ENCODE measurements at regions of chr9 and their contacts with region 1.

Region 1: DNA sequence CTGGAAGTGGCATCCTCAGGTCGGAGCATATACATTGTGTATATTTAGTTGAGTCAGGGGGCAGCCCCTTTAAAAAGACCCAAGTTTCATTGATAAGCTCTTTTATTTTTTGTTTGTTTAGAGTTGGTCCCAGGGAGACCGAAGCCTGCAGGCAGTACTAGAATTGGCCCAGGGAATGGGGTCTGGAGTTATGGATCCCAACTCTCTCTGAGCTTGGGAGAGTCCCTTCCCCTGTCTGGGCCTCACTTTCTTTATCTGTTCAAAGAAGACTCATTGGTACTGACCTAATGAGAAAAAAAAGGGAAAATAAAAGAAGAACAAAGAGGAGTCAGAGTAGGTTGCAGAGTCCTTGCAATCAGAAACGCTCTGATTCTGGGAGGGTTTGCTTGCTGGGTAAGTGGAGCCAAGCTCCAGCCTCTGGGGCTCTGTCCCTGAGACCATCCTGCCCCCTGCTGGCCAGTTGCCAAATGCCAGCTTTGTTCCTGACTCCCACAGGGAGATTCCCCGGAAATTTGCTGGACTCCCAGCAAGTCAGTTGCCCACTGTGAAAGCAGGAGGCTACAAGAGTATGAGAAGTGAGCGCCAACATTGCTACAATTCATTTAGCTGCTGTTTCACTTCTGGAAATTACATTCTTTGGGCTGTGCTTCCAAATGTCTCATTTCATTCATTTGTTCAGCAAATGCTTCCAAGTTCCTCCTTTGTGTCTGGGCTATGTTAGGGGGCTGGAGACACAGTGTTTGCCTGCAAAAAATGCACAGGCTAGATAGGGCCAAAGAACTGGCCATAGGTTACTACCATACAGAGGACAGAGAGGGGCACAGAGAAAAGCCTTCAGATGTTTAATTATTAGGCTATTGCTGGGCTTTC is 156.2 kb downstream of the MELK start:
- DNase-seq: peak; percentile 78 to 88
- H3K4me3 ChIP-seq: no peak overlapping the region
- H3K4me3 Mint-ChIP-seq: no peak overlapping the region
- H3K27ac Mint-ChIP-seq: no peak overlapping the region
- H3K4me1 ChIP-seq: no peaks in the 10 kb centered on the region
- H3K4me1 Mint-ChIP-seq: no peaks in the 10 kb centered on the region
- H3K27me3 ChIP-seq: no peaks in the 10 kb centered on the region
- H3K27me3 Mint-ChIP-seq: no peaks in the 10 kb centered on the region
- CTCF ChIP-seq: peak; percentile 91 to 92

Region 2: GRCh38 chr9:36632892-36633291 is 96.0 kb before region 1 on chr9:
- CTCF ChIA-PET with region 1: interaction called, 33 read pairs
- POLR2A ChIA-PET with region 1: no interaction called
- intact Hi-C with region 1: loop called (anchors 1 kb)
- DNase-seq: peak in 1 of 2 experiments; percentile 3
- H3K4me3 ChIP-seq: no peak overlapping the region
- H3K4me3 Mint-ChIP-seq: no peak overlapping the region
- H3K27ac Mint-ChIP-seq: no peak overlapping the region
- H3K4me1 ChIP-seq: no peaks in the 10 kb centered on the region
- H3K4me1 Mint-ChIP-seq: no peaks in the 10 kb centered on the region
- H3K27me3 ChIP-seq: no peaks in the 10 kb centered on the region
- H3K27me3 Mint-ChIP-seq: no peaks in the 10 kb centered on the region
- CTCF ChIP-seq: peak; percentile 38 to 41

Region 3: GRCh38 chr9:36873247-36873875 is 144.5 kb after region 1 on chr9:
- CTCF ChIA-PET with region 1: no interaction called
- POLR2A ChIA-PET with region 1: no interaction called
- intact Hi-C with region 1: no loop called
- DNase-seq: peak; percentile 71 to 74
- H3K4me3 ChIP-seq: no peak overlapping the region
- H3K4me3 Mint-ChIP-seq: no peak overlapping the region
- H3K27ac Mint-ChIP-seq: no peak overlapping the region
- H3K4me1 ChIP-seq: peaks cover 6% of the 10 kb centered on the region
- H3K4me1 Mint-ChIP-seq: peaks cover 9% of the 10 kb centered on the region
- H3K27me3 ChIP-seq: no peaks in the 10 kb centered on the region
- H3K27me3 Mint-ChIP-seq: peaks cover 4% of the 10 kb centered on the region
- CTCF ChIP-seq: peak; percentile 91 to 94

Measured in Caco-2 (cell line).